BJ (cell line): ENCODE measurements at regions of chr11 and their contacts with region 1.

Region 1: DNA sequence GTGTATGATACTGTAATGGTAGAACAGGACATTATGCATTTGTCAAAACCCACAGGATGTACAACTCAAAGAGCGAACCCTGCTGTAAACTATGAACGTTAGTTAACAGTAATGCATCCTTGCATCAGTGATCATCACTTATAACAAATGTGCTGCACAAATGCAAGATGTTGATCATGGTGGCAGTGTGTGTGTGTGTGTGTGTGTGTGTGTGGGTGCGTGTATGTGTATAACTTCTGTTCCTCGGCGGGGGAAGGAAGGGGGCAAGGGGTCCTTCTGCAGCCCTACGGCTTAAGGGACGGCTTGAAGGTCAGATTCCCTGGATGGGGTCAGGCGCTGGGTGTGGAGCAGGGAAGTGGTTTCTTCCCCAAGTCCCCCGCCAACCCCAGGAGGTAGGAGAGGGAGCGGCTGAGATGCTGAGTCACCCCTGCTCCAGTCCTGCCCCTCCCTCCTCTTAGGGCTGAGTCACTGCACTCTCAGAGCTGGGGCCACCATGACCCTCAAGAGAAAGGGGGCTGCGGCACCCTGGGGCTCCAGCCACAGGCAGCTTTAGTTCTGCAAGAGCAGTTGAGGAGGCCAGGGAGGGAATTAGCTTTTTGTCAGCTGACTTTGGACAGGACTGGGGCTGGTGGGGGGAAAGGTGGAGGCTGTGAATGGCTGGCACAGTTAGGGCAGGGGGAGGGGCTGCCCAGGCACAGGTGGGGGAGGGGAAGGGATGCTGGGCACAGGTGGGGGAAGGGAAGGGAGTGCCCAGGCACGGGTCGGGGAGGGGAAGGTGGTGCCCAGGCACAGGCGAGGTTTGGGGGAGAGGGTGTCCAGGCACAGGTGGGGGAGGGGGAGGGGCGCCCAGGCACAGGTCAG is 8.8 kb upstream of the CTSD start:
- DNase-seq: peak; percentile 72
- H3K4me3 ChIP-seq: no peak overlapping the region
- H3K27me3 ChIP-seq: 0 out of 2 replicates have a peak, but pooled peaks cover 1% of the 10 kb centered on the region
- CTCF ChIP-seq: no peak

Region 2: DNA sequence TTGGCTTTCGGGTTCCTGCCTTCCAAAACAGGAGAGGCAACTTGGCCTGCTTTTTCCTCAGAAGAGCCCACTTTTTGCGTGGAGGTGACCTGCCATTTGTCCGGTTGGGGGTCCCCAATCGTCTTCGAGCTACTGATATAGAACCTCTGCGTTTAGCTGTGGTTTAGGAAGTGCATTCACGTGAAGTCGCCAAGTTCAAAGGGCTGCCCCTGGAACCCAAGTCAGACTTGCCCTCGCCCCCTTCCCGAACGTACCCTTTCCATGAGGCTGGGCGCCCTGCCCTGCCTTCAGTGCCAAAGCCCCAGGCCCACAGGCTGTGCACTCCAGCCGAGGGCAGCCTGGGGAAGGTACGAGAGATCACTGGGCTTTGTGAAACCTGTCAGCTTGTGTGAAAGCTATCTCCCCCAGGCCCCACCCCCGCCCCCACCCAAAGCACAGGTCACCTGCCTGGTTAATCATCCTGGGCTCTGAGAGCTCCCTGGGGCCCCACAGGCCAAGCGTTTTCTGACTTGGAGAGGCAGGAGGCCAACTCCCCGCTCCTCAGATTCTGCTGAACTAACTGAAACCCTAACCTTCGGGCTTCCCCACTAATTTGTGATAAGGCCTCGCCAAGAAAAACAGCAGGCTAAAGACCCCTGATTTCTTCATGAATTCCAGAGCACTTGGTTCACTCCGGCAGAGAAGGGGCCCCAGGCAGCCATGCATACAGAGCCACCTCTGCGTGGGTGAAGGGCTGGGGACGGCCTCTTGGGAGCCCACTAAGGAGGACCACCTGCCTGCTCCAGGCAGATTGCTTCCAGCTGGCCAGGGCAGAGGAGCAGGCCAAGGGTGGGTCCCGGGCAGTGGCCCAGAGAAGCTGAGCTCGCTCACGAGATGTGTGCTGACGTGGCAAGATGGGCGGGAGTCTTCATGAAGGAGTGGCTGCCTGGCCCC is 953.1 kb after region 1 on chr11:
- CTCF ChIA-PET with region 1: no interaction called
- POLR2A ChIA-PET with region 1: interaction called, 11 read pairs
- DNase-seq: no peak
- H3K4me3 ChIP-seq: no peak overlapping the region
- H3K27me3 ChIP-seq: peaks cover 14% of the 10 kb centered on the region
- CTCF ChIP-seq: no peak